ENCODE measurements at regions of chr1 and their contacts with region 1.

Region 1: DNA sequence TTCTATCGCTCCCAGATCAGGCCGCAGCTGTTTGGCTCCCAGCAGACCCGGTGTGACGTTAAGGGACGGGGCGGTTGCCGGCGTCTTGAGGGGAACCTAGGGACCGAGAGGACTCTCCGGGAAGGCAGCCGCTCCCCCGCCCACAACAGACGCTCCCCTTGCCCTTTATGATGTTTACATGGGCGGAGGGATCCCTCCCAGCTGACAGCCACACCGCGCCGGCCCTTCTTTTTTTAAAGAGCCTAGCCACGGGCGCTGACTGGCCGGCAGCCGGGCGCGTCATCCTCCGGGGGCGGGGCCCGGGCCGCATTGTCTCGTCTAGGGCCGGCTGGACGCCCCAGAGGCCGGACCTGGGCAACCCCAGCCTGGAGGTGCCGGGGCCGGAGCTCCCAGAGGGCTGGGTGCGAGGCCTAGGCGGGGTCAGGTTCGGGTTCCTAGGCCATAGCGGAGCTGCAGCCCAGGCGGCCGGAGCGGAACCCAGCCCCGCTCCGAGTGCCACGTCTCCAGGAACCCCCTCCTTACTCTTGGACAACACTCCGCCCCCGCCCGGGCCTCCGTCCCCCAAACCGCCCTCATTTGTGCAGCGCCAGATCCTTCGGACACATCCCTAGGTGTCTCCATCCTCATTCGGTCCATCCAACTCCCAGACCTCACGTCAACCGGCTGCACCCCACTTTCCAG is at the start of gene PCAT6:
- DNase-seq: peak; percentile 85
- H3K4me3 Mint-ChIP-seq: peak within 1 kb of the TSS; percentile 92
- H3K27ac Mint-ChIP-seq: peak within 1 kb of the TSS; percentile 80
- H3K4me1 Mint-ChIP-seq: peaks cover 35% of the 10 kb centered on the region
- H3K27me3 Mint-ChIP-seq: peaks cover 20% of the 10 kb centered on the region
- total RNA-seq, gene PCAT6: 1.6 TPM in 2 replicates

Region 2: DNA sequence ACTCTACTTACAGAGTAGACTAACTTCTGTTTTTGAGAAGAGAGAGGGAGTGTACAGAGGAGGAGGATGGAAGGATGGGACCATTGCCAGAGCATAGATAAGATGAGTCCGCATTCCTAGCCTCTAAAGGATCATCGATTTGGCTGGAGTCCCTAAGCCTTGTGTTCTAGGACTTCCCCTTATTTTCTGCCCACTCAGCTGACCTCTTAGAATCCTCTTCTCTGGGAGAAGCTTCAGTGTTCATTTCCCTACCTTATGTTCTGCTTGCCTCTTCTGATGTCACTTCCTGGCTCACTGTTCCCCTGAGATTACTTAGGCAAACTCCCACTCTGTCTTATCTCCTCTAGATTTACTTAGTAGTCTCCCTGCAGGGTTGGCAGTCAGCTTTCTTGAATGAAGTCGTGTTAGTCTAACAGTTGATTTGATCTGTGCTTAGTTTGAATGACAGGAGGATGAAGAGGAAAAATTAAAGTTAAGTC is 257.2 kb before region 1 on chr1:
- intact Hi-C with region 1: no loop called
- DNase-seq: no peak
- H3K4me3 Mint-ChIP-seq: no peak overlapping the region
- H3K27ac Mint-ChIP-seq: no peak overlapping the region
- H3K4me1 Mint-ChIP-seq: peaks cover 9% of the 10 kb centered on the region
- H3K27me3 Mint-ChIP-seq: no peaks in the 10 kb centered on the region

Region 3: GRCh38 chr1:202796302-202797069 is 14.3 kb before region 1 on chr1:
- intact Hi-C with region 1: no loop called
- DNase-seq: no peak
- H3K4me3 Mint-ChIP-seq: no peak overlapping the region
- H3K27ac Mint-ChIP-seq: no peak overlapping the region
- H3K4me1 Mint-ChIP-seq: peaks cover 15% of the 10 kb centered on the region
- H3K27me3 Mint-ChIP-seq: no peaks in the 10 kb centered on the region

Region 4: GRCh38 chr1:202835548-202836090 is 24.9 kb after region 1 on chr1:
- intact Hi-C with region 1: loop called (anchors 2 kb)
- DNase-seq: peak; percentile 14
- H3K4me3 Mint-ChIP-seq: peak overlapping the region; percentile 45
- H3K27ac Mint-ChIP-seq: peak overlapping the region; percentile 28
- H3K4me1 Mint-ChIP-seq: peaks cover 42% of the 10 kb centered on the region
- H3K27me3 Mint-ChIP-seq: no peaks in the 10 kb centered on the region

Region 5: DNA sequence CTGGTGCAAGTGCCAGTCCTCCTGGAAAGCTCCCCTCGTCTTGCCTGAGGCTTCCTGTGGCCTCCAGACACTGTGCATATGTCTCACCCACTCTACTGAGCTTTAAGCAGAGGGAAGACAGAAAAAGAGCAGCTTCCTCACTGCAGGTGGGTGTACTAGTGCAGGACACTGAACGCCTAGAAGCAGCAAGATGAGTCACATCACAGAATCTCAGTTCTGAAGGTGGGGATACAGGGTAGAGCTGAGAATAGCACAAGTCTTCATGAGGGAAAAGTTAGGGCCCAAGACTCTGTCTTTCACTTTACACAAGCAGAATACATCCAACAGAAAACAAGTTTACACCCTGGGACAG is 37.4 kb after region 1 on chr1:
- intact Hi-C with region 1: no loop called
- DNase-seq: no peak
- H3K4me3 Mint-ChIP-seq: no peak overlapping the region
- H3K27ac Mint-ChIP-seq: no peak overlapping the region
- H3K4me1 Mint-ChIP-seq: peaks cover 7% of the 10 kb centered on the region
- H3K27me3 Mint-ChIP-seq: peaks cover 3% of the 10 kb centered on the region

Region 6: DNA sequence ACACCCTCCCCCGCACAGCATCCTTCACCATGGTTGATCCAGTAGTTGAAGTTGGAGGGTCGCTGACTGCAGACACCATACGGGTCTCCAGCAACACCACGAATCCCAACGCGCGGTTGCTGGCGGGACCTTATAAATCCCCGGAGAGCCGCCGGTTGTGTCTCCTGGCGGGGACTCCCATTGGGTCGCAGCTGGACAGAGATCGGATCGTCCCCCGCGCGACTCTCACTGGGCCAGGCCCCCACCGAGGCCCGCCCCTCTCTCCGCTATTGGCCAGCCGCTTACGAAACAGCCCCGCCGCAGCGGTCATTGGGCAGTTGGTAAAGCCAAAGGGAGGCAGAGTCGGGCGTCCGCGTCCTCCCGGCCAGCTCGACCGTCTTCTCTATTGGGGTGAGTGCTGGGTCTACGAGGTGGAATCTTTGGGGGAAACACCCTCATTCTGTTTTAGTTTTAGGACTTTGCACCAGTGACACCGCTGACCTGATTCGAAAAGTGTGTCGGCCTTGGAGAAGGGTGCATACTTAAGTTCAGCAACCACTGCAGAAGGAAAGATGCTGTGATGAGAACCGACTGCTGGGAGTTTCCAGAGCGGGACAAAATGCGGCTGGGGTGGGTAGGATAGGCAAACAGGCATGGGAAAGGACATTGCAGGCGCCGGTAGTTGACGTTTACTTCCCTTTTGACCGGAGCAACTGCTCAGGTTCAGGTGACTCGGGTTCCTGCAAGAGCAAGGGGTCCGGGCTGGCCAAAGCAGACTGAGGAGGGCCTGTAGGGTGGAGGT is 50.9 kb after region 1 on chr1:
- intact Hi-C with region 1: loop called (anchors 1 kb)
- DNase-seq: peak; percentile 28
- H3K4me3 Mint-ChIP-seq: peak overlapping the region; percentile 79
- H3K27ac Mint-ChIP-seq: no peak overlapping the region
- H3K4me1 Mint-ChIP-seq: peaks cover 12% of the 10 kb centered on the region
- H3K27me3 Mint-ChIP-seq: peaks cover 47% of the 10 kb centered on the region

Region 7: DNA sequence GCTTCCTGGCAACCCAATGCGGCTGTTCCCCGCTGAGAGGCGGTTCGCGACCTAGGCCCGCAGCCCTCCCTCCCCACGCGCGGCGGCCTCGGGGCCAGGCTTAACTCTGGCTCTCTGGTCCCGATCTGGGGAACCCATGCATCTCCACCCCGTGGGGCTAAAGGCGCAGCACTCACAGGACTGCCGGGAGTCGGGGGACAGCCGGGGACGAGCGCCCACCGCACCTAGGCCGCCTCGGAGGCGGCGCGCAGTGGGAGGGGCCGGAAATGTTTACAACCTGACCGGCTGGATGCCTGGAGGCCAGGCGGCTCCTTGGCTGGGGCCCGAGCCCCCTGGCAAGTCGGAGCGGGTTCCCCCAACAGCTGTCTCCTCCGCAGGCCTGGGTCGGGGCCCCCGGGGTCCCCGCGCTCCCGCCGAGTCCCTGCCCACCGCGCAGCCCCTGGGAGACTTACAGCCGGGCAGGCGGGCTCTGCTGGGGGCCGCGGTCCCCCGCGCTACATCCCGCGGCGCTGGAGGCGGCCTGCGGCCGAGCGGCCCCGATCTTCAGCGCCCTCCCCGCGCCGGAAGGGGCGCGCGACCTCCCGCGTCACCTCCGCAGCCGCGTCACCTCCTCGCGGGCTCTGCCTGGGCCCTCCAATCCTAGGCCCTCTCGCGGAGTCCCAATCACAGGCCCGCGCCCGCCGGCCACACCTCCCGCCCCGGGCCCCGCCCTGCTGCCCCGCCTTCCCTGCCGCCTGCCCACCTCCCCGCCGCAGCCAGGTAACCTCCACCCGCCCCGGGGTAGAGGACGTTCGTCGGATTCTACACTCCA is 147.2 kb after region 1 on chr1 and contains the start of gene ADIPOR1:
- intact Hi-C with region 1: loop called (anchors 2 kb)
- DNase-seq: peak; percentile 92
- H3K4me3 Mint-ChIP-seq: peak within 1 kb of the TSS; percentile 94
- H3K27ac Mint-ChIP-seq: peak within 1 kb of the TSS; percentile 58
- H3K4me1 Mint-ChIP-seq: peaks cover 29% of the 10 kb centered on the region
- H3K27me3 Mint-ChIP-seq: no peaks in the 10 kb centered on the region
- total RNA-seq, gene ADIPOR1: 79.1 and 79.2 TPM in 2 replicates

Region 8: GRCh38 chr1:203368624-203369451 is 558.1 kb after region 1 on chr1:
- intact Hi-C with region 1: no loop called
- DNase-seq: no peak
- H3K4me3 Mint-ChIP-seq: no peak overlapping the region
- H3K27ac Mint-ChIP-seq: no peak overlapping the region
- H3K4me1 Mint-ChIP-seq: no peaks in the 10 kb centered on the region
- H3K27me3 Mint-ChIP-seq: peaks cover 23% of the 10 kb centered on the region

Measured in activated T-helper 2 cell treated with anti-CD3 and anti-CD28 coated beads, Interferon-gamma antibody, Interleukin-2, Interleukin-4, amounts not matched to agents 10 μg/mL and 5 μg/mL and 100 μg/mL, durations not matched to agents 14 hours and 24 hours and 36 hours (primary cell).